Activated B cell treated with CpG ODN at 0.5 μM for 24 hours (primary cell): ENCODE measurements at regions of chr1 and their contacts with region 1.

Region 1: DNA sequence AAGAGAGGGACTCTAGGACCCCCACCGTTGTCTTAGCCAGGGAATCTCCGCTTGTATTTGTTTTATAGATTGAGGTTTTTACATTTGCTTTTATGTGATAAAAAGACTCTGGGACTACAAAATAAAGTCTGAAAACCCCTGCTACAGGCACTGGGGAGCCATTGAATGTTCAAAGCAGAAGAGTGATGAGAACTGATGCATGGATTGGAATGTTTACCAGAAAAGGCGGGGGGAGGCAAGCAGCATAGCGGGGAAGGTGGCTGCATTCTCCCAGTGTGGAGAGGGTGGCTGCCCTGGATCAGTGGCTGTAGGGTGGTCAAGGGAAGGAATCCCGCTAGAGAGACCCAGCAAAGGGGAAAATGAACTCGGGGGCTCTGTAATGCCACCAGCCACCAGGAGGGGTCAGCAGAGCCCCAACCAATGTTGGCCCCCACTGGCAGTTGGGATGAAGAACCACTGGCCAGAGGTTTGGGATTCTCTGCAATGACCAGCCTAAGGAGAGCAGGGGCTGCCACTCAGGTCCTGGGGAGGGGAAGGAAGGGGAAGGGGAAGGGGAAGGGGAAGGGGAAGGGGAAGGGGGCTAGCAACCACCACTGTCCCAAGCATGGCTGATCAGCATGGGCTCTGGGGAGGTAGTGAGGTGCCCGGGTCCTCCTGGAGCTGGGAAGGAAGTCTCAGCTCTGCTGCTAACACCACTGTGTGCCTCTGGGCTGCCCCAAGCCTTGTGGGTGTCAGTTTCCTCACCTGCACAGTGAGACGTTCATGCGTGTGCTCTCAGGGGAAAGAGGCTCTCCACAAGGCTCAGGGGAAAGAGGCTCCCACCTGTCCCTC is 19.2 kb upstream of the PEF1 start:
- DNase-seq: peak; percentile 63
- ATAC-seq: peak; percentile 81
- H3K4me3 Mint-ChIP-seq: no peak overlapping the region
- H3K27ac Mint-ChIP-seq: peak overlapping the region; percentile 46
- H3K4me1 Mint-ChIP-seq: no peaks in the 10 kb centered on the region
- H3K27me3 Mint-ChIP-seq: peaks cover 9% of the 10 kb centered on the region
- CTCF ChIP-seq: peak; percentile 31

Region 2: DNA sequence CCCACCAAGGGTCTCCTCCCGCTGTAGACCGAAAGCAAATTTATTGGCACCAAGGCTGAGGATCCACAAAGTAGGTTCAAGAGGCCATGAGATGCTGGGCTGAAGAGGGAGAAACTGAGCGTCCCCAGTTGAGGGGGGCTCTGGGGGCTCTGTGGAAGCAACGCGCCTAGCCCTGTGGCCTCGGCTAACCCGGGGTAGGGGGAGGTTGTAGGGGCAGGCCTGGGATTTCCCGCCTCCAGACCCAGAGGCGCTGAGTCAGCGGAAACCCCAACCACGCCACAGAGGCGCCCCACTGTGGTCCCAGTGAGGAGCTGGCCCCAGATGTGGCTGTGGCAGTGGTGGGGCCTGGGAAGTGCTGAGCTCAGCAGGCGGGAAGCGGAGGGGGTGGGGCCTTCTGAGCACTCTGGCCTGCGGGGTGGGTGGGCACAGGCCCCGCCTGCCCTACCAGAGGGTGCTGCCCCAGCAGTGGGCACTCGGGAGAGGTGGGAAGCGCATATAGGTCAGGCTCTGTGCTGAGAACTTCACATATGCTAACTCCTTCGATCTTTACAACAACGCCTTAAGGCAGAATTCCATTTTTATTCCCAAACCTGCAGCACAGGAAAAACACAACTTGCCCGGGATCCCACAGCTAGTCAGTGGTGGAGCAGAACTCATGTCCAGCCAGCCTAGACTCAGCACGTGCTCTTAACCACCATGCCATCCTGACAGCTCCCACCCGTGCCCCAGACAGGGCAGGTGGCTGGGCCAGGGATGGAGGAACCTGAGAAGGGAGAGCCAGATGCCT is 41.4 kb after region 1 on chr1:
- CTCF ChIA-PET with region 1: interaction called, 6 read pairs
- POLR2A ChIA-PET with region 1: no interaction called
- intact Hi-C with region 1: loop called (anchors 2 kb)
- DNase-seq: peak; percentile 27
- ATAC-seq: peak; percentile 76
- H3K4me3 Mint-ChIP-seq: peak overlapping the region; percentile 49
- H3K27ac Mint-ChIP-seq: no peak overlapping the region
- H3K4me1 Mint-ChIP-seq: peaks cover 39% of the 10 kb centered on the region
- H3K27me3 Mint-ChIP-seq: peaks cover 44% of the 10 kb centered on the region
- CTCF ChIP-seq: no peak

Region 3: GRCh38 chr1:31745096-31745945 is 81.5 kb after region 1 on chr1:
- CTCF ChIA-PET with region 1: interaction called, 3 read pairs
- POLR2A ChIA-PET with region 1: no interaction called
- intact Hi-C with region 1: loop called (anchors 1 kb)
- DNase-seq: no peak
- ATAC-seq: peak; percentile 64
- H3K4me3 Mint-ChIP-seq: no peak overlapping the region
- H3K27ac Mint-ChIP-seq: no peak overlapping the region
- H3K4me1 Mint-ChIP-seq: peaks cover 37% of the 10 kb centered on the region
- H3K27me3 Mint-ChIP-seq: peaks cover 4% of the 10 kb centered on the region
- CTCF ChIP-seq: no peak

Region 4: DNA sequence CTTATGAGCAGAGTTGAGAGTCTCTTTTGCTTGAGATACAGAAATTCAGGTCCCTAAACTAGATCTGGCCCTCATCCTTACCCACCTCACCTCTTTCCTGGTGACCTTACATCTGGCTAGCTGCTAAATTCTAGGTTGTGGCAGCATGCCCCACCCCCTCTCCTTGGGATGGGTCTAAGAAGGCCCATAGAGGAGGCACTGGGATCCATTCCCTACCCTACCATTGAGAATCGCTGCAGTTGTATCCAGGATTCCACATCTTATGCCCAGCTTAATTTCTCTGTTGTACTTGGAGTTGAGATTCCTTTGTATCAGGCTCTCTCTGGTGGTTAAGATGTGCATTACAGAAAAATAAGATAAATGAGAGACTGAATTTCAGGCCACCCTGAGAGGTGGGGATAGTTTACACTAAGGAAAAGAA is 399.4 kb after region 1 on chr1:
- CTCF ChIA-PET with region 1: no interaction called
- POLR2A ChIA-PET with region 1: no interaction called
- intact Hi-C with region 1: loop called (anchors 1 kb)
- DNase-seq: no peak
- ATAC-seq: peak; percentile 75
- H3K4me3 Mint-ChIP-seq: no peak overlapping the region
- H3K27ac Mint-ChIP-seq: no peak overlapping the region
- H3K4me1 Mint-ChIP-seq: peaks cover 9% of the 10 kb centered on the region
- H3K27me3 Mint-ChIP-seq: no peaks in the 10 kb centered on the region
- CTCF ChIP-seq: no peak